Motor neuron (in vitro differentiated cells): ENCODE measurements at regions of chr2 and their contacts with region 1.

Region 1: GRCh38 chr2:175282290-175282689 is 100.8 kb upstream of the ATP5MC3 start:
- ATAC-seq: peak; percentile 48 to 82 (median 68)
- H3K4me3 ChIP-seq: no peak overlapping the region
- H3K27ac ChIP-seq: no peak overlapping the region
- H3K4me1 ChIP-seq: peaks cover 12 to 34% of the 10 kb centered on the region in 2 donors

Region 2: GRCh38 chr2:174729797-174730697 is 552.2 kb before region 1 on chr2:
- in situ Hi-C with region 1: no loop called
- ATAC-seq: peak; percentile 52 to 85 (median 68)
- H3K4me3 ChIP-seq: peak overlapping the region; percentile 15 to 29 (median 19)
- H3K27ac ChIP-seq: no peak overlapping the region
- H3K4me1 ChIP-seq: no peaks in the 10 kb centered on the region

Region 3: GRCh38 chr2:175030380-175031271 is 251.7 kb before region 1 on chr2:
- in situ Hi-C with region 1: loop called in 1 of 9 experiments (anchors 25 kb)
- ATAC-seq: peak in 7 of 8 experiments; percentile 51 to 96 (median 83)
- H3K4me3 ChIP-seq: no peak overlapping the region
- H3K27ac ChIP-seq: no peak overlapping the region
- H3K4me1 ChIP-seq: no peaks in the 10 kb centered on the region

Region 4: DNA sequence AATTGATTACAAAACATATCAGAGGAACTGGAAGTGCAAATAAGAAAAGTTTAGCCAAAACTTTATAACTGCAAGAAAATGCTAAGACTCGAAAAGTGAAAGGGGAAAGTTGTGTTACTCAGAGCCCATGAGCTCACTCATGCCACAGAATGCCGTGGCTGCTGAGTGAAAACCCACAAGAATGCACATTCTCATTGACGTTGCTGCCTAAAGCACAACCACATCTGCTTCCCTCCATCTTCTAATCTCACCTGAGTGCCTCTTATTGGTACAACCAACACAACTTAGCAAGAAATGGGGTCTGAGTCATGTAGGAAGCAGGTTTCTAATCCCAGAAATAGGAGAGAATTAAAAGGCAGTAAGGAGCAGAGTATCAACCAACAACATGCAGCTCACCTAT is 460.1 kb after region 1 on chr2:
- in situ Hi-C with region 1: no loop called
- ATAC-seq: no peak
- H3K4me3 ChIP-seq: no peak overlapping the region
- H3K27ac ChIP-seq: no peak overlapping the region
- H3K4me1 ChIP-seq: peaks cover 4 to 18% of the 10 kb centered on the region in 2 donors